ENCODE measurements at regions of chr4 and their contacts with region 1.

Region 1: DNA sequence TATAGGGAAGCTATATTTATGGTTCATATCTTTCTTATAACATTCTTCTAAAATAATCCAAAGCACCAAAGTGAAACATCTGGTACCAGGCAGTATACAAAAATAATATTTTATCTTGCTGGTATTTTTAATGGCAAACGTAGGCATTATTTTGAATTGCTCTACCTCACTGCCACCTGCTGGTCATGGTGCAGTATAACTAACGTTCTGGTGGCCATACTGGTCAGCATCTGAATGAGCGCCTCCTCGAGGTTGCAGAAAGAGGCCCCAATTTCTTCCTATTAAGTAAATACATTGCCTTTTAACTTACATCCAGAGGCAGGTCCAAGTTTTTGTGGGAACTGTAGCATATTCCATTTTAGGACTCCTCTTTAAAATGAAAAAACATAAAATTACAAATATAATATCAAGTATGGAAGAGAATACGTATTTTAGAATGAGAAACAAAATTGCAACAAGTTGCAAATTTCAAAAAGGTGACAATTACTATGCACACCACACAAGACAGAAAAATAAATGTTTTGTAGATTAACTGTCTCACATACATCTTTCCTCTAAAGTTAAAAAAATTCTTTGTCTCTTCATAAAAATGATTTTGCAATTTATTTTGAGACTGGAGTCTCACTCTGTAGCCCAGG is 22.9 kb upstream of the CWH43 start:
- DNase-seq: peak; percentile 91
- H3K4me3 Mint-ChIP-seq: no peak overlapping the region
- H3K27ac Mint-ChIP-seq: no peak overlapping the region
- H3K4me1 Mint-ChIP-seq: no peaks in the 10 kb centered on the region
- H3K27me3 Mint-ChIP-seq: peaks cover 18% of the 10 kb centered on the region

Region 2: GRCh38 chr4:48315728-48316630 is 647.2 kb before region 1 on chr4:
- intact Hi-C with region 1: loop called (anchors 5 kb)
- DNase-seq: peak; percentile 78
- H3K4me3 Mint-ChIP-seq: no peak overlapping the region
- H3K27ac Mint-ChIP-seq: no peak overlapping the region
- H3K4me1 Mint-ChIP-seq: peaks cover 2% of the 10 kb centered on the region
- H3K27me3 Mint-ChIP-seq: peaks cover 2% of the 10 kb centered on the region

Region 3: GRCh38 chr4:48578132-48578968 is 384.8 kb before region 1 on chr4:
- intact Hi-C with region 1: loop called (anchors 1 kb)
- DNase-seq: peak; percentile 85
- H3K4me3 Mint-ChIP-seq: no peak overlapping the region
- H3K27ac Mint-ChIP-seq: no peak overlapping the region
- H3K4me1 Mint-ChIP-seq: peaks cover 4% of the 10 kb centered on the region
- H3K27me3 Mint-ChIP-seq: no peaks in the 10 kb centered on the region

Region 4: DNA sequence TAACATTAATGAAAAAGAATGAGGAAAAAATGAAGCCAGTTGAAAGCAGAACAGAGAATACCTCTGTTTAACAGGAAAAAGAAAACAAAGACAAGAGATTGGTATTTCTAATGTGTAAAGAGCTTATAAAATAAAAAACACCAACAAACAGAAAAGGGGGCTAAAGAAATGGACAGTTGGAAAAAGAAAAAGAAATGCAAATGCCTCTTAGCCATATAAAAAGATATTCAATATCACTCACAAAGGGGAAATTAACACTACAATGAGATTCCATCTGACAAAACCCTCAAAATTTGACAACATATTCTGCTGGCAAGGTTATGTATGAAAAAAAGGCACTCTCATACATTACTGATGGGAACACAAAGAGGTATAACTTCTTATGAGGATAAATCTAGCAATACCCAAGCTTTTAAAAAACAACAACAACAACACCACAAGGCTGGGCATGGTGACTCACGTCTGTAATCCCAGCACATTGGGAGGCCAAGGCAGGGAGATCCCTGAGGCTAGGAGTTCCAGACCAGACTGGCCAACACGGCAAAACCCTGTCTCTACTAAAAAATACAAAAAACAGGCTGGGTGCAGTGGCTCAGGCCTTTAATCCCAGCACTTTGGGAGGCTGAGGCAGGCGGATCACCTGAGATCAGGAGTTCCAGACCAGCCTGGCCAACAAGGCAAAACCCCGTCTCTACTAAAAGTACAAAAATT is 258.9 kb before region 1 on chr4:
- intact Hi-C with region 1: loop called (anchors 5 kb)
- DNase-seq: no peak
- H3K4me3 Mint-ChIP-seq: no peak overlapping the region
- H3K27ac Mint-ChIP-seq: no peak overlapping the region
- H3K4me1 Mint-ChIP-seq: peaks cover 14% of the 10 kb centered on the region
- H3K27me3 Mint-ChIP-seq: no peaks in the 10 kb centered on the region

Region 5: DNA sequence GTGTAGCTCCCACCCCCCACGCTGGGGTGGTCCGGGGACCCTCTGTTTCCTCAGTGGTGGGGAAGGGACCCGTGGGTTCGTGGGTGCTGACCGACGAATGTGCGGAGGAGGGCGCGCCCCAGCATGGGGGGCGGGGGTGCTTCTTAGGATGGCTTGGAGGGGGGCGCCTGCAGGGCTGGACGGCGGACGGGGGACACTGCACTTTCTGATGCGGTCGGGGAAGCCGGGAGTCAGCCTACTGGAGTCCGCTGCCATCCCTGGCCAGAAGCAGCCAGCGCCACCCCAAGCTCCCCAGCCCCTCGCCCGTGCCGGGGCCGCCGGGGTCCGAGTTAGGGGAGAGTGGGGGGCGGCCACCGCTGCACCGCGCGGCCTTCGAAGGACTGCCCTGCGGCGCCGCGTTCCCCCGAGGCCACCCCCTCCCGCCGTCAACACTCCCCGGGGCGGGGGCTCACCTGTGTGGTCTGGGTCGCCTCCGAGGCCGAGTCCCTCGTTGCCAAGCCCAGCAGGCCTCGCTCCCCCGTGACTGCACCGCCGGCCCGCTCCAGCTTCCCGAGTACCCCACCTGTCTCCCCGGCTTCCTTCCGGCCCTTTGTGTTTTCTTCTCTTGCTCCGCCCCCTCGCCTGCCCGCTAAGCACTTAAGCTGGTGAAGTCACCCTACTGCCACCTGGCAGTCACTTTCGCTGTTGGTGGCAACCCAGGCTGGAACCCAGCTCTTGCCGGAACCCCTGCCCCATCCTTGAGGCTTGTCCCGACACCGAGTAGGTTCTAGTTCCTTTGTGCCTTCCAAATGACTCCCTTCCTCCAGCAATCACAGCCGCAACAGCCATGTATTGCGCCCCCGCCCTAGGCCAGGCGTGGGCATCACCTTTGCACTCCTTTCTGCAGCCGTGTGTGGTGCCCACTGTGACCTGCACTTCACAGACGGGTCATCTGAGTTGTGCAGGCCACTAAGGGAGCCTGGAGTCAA is 56.7 kb before region 1 on chr4 and contains the start of gene OCIAD2:
- intact Hi-C with region 1: loop called (anchors 5 kb)
- DNase-seq: peak; percentile 93
- H3K4me3 Mint-ChIP-seq: peak within 1 kb of the TSS; percentile 94
- H3K27ac Mint-ChIP-seq: peak within 1 kb of the TSS; percentile 90
- H3K4me1 Mint-ChIP-seq: peaks cover 39% of the 10 kb centered on the region
- H3K27me3 Mint-ChIP-seq: no peaks in the 10 kb centered on the region
- total RNA-seq, gene OCIAD2: 54.1 and 65.3 TPM in 2 replicates

Region 6: DNA sequence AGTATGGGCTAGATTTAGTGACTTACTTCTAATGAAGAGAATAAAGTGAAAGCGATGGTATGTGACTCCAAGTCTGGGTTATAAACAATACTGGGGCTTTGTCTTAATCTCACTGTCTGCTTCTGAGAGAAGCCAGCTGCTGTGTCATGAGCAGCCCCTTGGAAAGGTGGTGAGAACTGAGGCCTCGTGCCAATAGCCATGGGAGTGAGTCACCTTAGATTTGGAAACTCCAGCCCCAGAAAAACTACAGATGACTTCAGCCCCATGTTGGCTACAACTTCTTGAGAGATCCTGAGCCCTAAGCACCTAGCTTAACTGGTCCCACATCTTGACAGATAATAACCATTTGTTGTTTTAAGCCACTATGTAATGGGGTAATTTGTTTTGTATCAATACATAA is 100.5 kb after region 1 on chr4:
- intact Hi-C with region 1: no loop called
- DNase-seq: no peak
- H3K4me3 Mint-ChIP-seq: no peak overlapping the region
- H3K27ac Mint-ChIP-seq: no peak overlapping the region
- H3K4me1 Mint-ChIP-seq: no peaks in the 10 kb centered on the region
- H3K27me3 Mint-ChIP-seq: no peaks in the 10 kb centered on the region